Caco-2 (cell line): ENCODE measurements at regions of chr10 and their contacts with region 1.

Region 1: DNA sequence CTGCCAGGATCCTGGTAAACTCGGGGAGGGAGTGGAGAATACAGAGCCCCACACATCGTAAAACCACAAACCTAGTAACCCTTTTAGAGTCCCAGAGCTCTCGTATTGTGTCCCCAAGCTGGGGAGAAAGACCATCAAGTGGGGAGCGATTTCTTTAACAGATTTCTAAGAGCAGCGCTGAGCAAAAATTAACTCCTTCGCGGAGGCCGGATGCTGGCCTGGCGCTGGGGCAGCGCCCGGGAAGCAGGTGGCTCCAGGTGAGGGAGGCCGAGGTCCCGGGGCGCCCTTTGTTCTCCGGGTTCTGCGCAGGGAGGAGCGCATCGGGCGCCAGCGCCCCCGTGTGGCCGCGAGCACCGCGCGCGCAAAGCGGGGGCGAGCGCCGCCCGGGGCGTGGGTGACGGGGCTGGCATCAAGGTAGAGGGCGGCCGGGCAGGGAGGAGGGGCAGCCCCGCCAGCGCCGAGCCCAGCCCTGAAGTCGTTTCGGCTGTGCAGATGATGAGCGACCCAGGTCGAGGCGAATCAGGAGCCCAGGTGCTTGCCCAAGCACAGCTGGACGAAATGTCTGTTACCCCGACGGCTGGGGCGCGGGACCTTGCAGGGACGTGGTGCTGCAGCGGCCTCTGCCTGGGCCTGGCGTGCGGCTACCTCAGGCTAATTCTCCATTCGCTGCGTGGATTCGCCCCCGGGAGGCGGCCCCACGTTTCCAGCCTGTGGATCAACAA is 10.4 kb upstream of the FGFR2 start:
- DNase-seq: peak; percentile 59 to 74
- H3K4me3 ChIP-seq: no peak overlapping the region
- H3K4me3 Mint-ChIP-seq: peak overlapping the region; percentile 55
- H3K27ac Mint-ChIP-seq: peak overlapping the region; percentile 96
- H3K4me1 ChIP-seq: peaks cover 63% of the 10 kb centered on the region
- H3K4me1 Mint-ChIP-seq: peaks cover 57% of the 10 kb centered on the region
- H3K27me3 ChIP-seq: no peaks in the 10 kb centered on the region
- H3K27me3 Mint-ChIP-seq: no peaks in the 10 kb centered on the region
- CTCF ChIP-seq: peak; percentile 46 to 91

Region 2: GRCh38 chr10:120942806-120943413 is 665.7 kb before region 1 on chr10:
- CTCF ChIA-PET with region 1: no interaction called
- POLR2A ChIA-PET with region 1: no interaction called
- intact Hi-C with region 1: loop called (anchors 2 kb)
- DNase-seq: peak; percentile 81 to 92
- H3K4me3 ChIP-seq: no peak overlapping the region
- H3K4me3 Mint-ChIP-seq: no peak overlapping the region
- H3K27ac Mint-ChIP-seq: peak overlapping the region; percentile 83
- H3K4me1 ChIP-seq: peaks cover 13% of the 10 kb centered on the region
- H3K4me1 Mint-ChIP-seq: peaks cover 13% of the 10 kb centered on the region
- H3K27me3 ChIP-seq: no peaks in the 10 kb centered on the region
- H3K27me3 Mint-ChIP-seq: no peaks in the 10 kb centered on the region
- CTCF ChIP-seq: peak; percentile 85 to 93

Region 3: GRCh38 chr10:121076776-121077715 is 531.6 kb before region 1 on chr10:
- CTCF ChIA-PET with region 1: no interaction called
- POLR2A ChIA-PET with region 1: interaction called, 3 read pairs
- intact Hi-C with region 1: loop called (anchors 5 kb)
- DNase-seq: peak; percentile 81
- H3K4me3 ChIP-seq: no peak overlapping the region
- H3K4me3 Mint-ChIP-seq: peak overlapping the region; percentile 43
- H3K27ac Mint-ChIP-seq: peak overlapping the region; percentile 68
- H3K4me1 ChIP-seq: peaks cover 75% of the 10 kb centered on the region
- H3K4me1 Mint-ChIP-seq: peaks cover 58% of the 10 kb centered on the region
- H3K27me3 ChIP-seq: no peaks in the 10 kb centered on the region
- H3K27me3 Mint-ChIP-seq: no peaks in the 10 kb centered on the region
- CTCF ChIP-seq: no peak

Region 4: GRCh38 chr10:121500674-121501332 is 107.8 kb before region 1 on chr10:
- CTCF ChIA-PET with region 1: no interaction called
- POLR2A ChIA-PET with region 1: no interaction called
- intact Hi-C with region 1: loop called (anchors 2 kb)
- DNase-seq: peak; percentile 89 to 94
- H3K4me3 ChIP-seq: no peak overlapping the region
- H3K4me3 Mint-ChIP-seq: peak overlapping the region; percentile 56
- H3K27ac Mint-ChIP-seq: peak overlapping the region; percentile 90
- H3K4me1 ChIP-seq: peaks cover 47% of the 10 kb centered on the region
- H3K4me1 Mint-ChIP-seq: peaks cover 32% of the 10 kb centered on the region
- H3K27me3 ChIP-seq: no peaks in the 10 kb centered on the region
- H3K27me3 Mint-ChIP-seq: no peaks in the 10 kb centered on the region
- CTCF ChIP-seq: no peak

Region 5: DNA sequence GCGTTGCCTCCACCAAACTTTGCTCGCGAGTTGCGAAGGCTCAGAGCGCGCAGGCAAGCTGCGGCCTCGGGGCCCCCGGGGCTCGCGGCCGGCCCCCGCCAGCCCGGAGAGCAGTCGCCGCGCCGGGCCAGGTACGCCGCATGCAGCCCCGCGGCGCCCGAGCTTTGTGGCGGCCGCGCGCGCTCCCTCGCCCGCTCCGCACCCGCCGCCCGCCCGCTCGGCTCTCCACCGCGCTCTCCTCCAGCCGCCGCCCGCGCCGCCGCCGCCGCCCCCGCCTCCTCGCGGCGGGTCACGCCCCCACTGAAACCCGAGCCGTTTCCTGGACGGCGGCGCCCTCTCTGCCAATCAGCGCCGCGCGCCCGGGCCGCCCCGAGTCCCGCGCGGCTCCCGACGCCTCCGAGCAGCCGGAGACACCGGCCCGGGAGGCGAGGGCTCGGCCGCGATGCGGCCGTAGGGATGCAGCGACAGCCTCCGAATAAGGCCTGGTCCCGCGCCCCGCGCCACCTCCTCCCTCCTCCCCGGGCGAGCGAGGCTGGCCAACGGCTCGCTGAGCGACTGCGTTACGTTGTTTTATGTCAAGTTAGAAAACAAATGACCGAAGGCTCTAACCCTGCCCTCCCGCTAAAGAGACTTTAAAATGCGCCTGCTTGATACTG is 10.3 kb before region 1 on chr10 and contains the start of gene FGFR2:
- CTCF ChIA-PET with region 1: no interaction called
- POLR2A ChIA-PET with region 1: no interaction called
- intact Hi-C with region 1: loop called (anchors 1 kb)
- DNase-seq: peak; percentile 88 to 95
- H3K4me3 ChIP-seq: peak within 1 kb of the TSS; percentile 98
- H3K4me3 Mint-ChIP-seq: peak within 1 kb of the TSS; percentile 95
- H3K27ac Mint-ChIP-seq: peak within 1 kb of the TSS; percentile 91
- H3K4me1 ChIP-seq: peaks cover 39% of the 10 kb centered on the region
- H3K4me1 Mint-ChIP-seq: peaks cover 18% of the 10 kb centered on the region
- H3K27me3 ChIP-seq: no peaks in the 10 kb centered on the region
- H3K27me3 Mint-ChIP-seq: no peaks in the 10 kb centered on the region
- CTCF ChIP-seq: no peak
- total RNA-seq, gene FGFR2: 266 and 286 TPM in 2 replicates

Region 6: DNA sequence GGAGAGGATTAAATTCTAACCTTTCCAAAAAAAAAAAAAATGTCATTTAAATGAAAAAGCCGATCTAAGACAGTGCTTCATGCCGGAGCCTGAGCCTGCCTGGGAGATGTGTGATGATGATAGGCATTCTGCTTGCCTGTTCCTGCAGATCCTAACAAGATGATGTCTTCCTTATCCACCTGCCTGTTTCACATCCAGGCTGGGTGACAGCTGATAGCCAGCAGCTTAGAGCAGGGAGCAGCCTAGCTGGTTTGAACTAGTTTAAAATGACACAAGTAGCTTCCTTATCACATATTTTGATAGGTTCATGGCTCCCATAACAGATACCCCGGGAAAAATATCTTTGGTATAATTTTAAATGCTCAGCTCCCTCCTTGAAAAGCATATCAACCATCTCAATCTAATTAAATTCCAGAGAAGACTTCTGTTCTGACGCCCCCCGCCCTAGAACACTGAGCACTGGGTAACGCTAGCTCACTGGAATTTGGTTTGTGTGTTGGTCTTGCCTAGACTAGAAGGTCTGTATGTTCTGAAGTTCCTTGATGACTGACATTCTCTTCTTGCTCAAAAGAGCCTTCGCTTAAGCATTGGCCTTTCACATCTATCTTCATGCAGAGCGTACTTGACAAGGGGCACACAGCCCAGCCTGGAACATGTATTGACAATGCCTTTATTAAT is 86.5 kb after region 1 on chr10:
- CTCF ChIA-PET with region 1: interaction called, 3 read pairs
- POLR2A ChIA-PET with region 1: no interaction called
- intact Hi-C with region 1: loop called (anchors 1 kb)
- DNase-seq: peak in 1 of 2 experiments; percentile 45
- H3K4me3 ChIP-seq: no peak overlapping the region
- H3K4me3 Mint-ChIP-seq: no peak overlapping the region
- H3K27ac Mint-ChIP-seq: peak overlapping the region; percentile 26
- H3K4me1 ChIP-seq: peaks cover 47% of the 10 kb centered on the region
- H3K4me1 Mint-ChIP-seq: peaks cover 41% of the 10 kb centered on the region
- H3K27me3 ChIP-seq: no peaks in the 10 kb centered on the region
- H3K27me3 Mint-ChIP-seq: no peaks in the 10 kb centered on the region
- CTCF ChIP-seq: no peak

Region 7: DNA sequence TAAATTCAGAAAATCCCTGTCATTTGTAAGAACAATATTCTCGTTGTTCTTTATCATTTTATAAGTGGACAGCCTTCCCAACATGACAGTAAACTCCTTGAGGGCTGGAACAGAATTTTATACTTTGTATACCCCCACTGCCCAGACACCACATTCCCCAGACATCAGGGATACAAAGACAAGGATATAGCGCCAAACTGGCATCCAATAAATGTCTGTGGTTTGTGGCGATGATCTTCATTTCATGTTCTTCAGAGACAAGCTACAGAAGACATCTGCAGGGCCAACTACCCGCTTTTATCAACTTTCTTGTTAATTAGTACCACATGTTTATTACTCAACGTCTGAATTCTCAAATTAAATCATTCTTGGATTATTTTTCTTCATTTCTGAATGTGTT is 163.3 kb after region 1 on chr10:
- CTCF ChIA-PET with region 1: interaction called, 3 read pairs
- POLR2A ChIA-PET with region 1: no interaction called
- intact Hi-C with region 1: loop called (anchors 1 kb)
- DNase-seq: no peak
- H3K4me3 ChIP-seq: no peak overlapping the region
- H3K4me3 Mint-ChIP-seq: peak overlapping the region; percentile 40
- H3K27ac Mint-ChIP-seq: peak overlapping the region; percentile 67
- H3K4me1 ChIP-seq: peaks cover 67% of the 10 kb centered on the region
- H3K4me1 Mint-ChIP-seq: peaks cover 17% of the 10 kb centered on the region
- H3K27me3 ChIP-seq: no peaks in the 10 kb centered on the region
- H3K27me3 Mint-ChIP-seq: no peaks in the 10 kb centered on the region
- CTCF ChIP-seq: no peak